ENCODE measurements at regions of chr2 and their contacts with region 1.

Region 1: GRCh38 chr2:74472086-74472944 is at the start of gene MRPL53:
- DNase-seq: peak; percentile 94
- ATAC-seq: peak; percentile 88
- H3K4me3 ChIP-seq: peak within 1 kb of the TSS; percentile 79
- H3K27ac ChIP-seq: peak within 1 kb of the TSS; percentile 80
- H3K4me1 ChIP-seq: peaks cover 14% of the 10 kb centered on the region
- H3K27me3 ChIP-seq: no peaks in the 10 kb centered on the region
- CTCF ChIP-seq: no peak
- total RNA-seq, gene MRPL53: 86.9 and 102 TPM in 2 replicates

Region 2: DNA sequence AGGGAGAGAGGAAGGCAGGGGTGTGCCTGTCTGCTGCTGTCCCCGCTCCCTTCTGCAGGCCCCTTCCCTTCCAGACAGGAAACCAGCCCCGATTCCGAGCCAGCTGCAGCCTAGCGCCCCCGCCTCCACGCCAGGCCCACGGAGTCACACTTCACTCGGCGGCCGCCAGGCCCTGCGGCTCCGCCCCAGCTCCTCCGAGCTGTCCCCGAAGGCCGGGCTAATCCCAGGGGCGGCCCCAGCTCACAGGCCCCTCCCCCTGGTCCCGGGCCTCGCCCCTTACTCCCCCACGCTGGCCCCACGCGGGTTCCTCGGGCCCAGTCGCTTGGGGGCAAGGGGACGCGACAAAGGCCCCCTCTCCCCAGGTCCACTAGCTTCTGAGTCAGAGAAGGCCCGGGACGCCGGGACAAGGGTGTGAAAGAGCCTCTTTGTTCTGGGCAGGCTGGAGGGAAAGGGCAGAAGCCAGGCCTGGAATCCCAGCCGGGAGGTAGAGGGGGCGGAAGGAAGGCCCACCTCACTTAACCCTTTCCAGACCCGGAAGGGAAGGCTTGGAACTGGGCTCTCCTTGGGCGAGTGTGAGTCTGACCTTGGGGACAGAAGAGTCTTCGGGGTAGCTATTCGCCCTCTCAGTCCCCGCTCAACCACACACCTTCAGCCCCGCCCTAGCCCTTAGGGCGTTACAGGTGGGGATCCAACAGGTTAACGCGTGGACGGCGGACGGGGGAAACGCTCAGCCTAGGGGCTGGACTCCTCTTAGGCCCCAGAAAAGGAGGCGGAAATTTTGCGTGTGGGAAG is 31.7 kb before region 1 on chr2:
- CTCF ChIA-PET with region 1: no interaction called
- POLR2A ChIA-PET with region 1: interaction called, 19 read pairs
- intact Hi-C with region 1: no loop called
- DNase-seq: peak; percentile 82
- ATAC-seq: peak; percentile 84
- H3K4me3 ChIP-seq: peak overlapping the region; percentile 73
- H3K27ac ChIP-seq: peak overlapping the region; percentile 85
- H3K4me1 ChIP-seq: peaks cover 34% of the 10 kb centered on the region
- H3K27me3 ChIP-seq: no peaks in the 10 kb centered on the region
- CTCF ChIP-seq: peak; percentile 26; the same call in 1 of the 2 replicates

Region 3: GRCh38 chr2:74512744-74513604 is 40.7 kb after region 1 on chr2:
- CTCF ChIA-PET with region 1: interaction called, 7 read pairs
- POLR2A ChIA-PET with region 1: interaction called, 21 read pairs
- intact Hi-C with region 1: no loop called
- DNase-seq: no peak
- ATAC-seq: no peak
- H3K4me3 ChIP-seq: peak overlapping the region; percentile 69
- H3K27ac ChIP-seq: no peak overlapping the region
- H3K4me1 ChIP-seq: peaks cover 8% of the 10 kb centered on the region; the same call in 1 of the 2 replicates
- H3K27me3 ChIP-seq: no peaks in the 10 kb centered on the region
- CTCF ChIP-seq: no peak

Region 4: DNA sequence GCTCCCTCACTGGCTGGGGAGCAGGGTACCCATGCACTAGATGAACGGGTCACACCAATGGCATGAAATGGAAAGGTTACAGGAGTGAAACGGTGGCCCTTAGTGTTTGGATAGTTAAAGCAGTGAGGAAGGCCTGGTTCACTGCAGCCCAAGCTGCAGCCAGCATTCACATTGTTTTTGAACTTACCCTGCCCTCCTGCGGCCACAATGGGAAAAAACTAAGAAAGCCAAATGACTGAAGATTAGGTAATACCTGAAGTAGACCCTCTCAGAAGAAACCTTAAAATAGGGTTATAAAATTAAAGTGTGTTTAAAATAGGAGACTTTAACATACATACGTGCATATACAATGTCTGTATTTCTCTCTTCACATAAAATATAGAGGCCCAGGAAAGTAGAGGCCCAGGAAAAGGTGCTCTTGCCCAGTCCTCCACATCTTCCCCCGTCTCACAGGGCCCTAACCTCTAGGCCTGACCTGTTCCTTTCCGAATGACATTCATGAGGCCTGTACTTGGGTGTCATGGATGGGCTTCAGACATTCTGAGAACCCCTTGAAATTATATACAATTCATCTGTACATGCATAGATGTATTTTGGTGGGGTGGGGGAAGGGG is 115.5 kb after region 1 on chr2:
- CTCF ChIA-PET with region 1: no interaction called
- POLR2A ChIA-PET with region 1: no interaction called
- intact Hi-C with region 1: loop called (anchors 5 kb)
- DNase-seq: peak; percentile 83
- ATAC-seq: peak; percentile 90
- H3K4me3 ChIP-seq: no peak overlapping the region
- H3K27ac ChIP-seq: no peak overlapping the region
- H3K4me1 ChIP-seq: peaks cover 19% of the 10 kb centered on the region
- H3K27me3 ChIP-seq: no peaks in the 10 kb centered on the region
- CTCF ChIP-seq: peak; percentile 84